Breast epithelium (tissue), 4 donors: ENCODE measurements at regions of chr3 and their contacts with region 1.

Region 1: DNA sequence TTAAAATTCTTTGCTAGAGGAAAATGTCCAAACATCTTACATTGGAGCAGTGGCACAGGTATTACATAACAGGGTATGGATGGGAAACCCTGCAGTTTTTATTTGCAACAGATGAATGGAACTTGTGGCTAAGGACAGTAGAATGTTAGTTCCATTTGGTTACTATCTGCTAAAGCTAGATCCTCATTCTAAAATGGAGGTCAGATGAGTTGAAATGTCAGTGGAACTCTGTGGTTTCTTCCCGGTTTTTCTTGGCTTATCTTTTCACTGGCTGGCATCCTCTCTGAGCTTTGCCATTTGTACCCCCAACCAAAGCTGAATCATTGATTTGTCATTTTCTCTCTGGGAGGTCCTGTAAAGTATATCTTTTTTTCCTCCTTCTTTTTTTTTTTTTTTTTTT is 68.9 kb downstream of the ARMC8 start:
- DNase-seq: no peak
- H3K4me3 ChIP-seq: no peak overlapping the region
- H3K27ac ChIP-seq: no peak overlapping the region
- H3K4me1 ChIP-seq: no peaks in the 10 kb centered on the region
- H3K27me3 ChIP-seq: no peaks in the 10 kb centered on the region
- CTCF ChIP-seq: no peak
- POLR2A ChIP-seq: no peak

Region 2: GRCh38 chr3:137222736-137223225 is 1033.2 kb before region 1 on chr3:
- intact Hi-C with region 1: no loop called
- DNase-seq: no peak
- H3K4me3 ChIP-seq: no peak overlapping the region
- H3K27ac ChIP-seq: no peak overlapping the region
- H3K4me1 ChIP-seq: no peaks in the 10 kb centered on the region
- H3K27me3 ChIP-seq: no peaks in the 10 kb centered on the region
- CTCF ChIP-seq: no peak
- POLR2A ChIP-seq: no peak

Region 3: DNA sequence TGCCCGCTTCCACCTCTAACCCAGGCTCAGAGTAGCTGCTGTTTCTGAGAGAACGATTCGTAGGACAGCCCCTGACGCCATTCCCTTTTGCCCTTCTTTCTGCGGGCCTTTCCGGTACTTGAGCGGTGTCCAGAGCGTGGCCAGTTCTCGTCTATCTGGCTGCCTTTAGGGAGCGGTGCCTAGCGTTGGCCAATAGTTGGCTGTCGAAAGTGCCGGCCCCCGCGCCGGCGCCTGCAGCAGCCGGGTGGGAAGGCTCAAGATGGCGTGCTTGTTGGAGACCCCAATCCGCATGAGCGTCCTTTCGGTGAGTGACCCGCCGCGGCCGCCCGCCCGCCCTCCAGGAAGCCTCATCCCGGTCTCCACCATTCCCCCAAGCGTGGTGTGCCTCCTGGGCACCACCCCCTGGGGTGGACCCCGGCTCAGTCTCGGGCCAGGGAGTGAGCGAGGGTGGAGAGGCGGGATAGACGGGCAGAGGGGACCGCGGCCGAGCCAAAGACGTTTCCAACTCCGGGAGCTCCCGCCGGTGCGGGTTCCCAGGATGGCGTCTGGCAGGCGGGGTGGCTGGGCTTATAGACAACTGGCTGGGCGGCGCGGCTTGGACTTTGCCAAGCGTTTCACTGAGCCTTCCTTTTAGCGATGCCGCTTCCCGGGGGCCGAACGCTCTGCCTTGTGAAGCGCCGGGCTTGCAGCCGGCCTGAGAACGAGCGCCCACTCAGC is 68.6 kb before region 1 on chr3 and contains the start of gene ARMC8:
- intact Hi-C with region 1: loop called (anchors 2 kb)
- DNase-seq: peak; percentile 25 to 57
- H3K4me3 ChIP-seq: peak within 1 kb of the TSS; percentile 79 to 99 (median 99)
- H3K27ac ChIP-seq: peak within 1 kb of the TSS; percentile 95 to 97
- H3K4me1 ChIP-seq: no peaks in the 10 kb centered on the region
- H3K27me3 ChIP-seq: no peaks in the 10 kb centered on the region
- CTCF ChIP-seq: no peak
- POLR2A ChIP-seq: no peak
- total RNA-seq, gene ARMC8: 74.4 to 93.3 (median 82.0) TPM

Region 4: DNA sequence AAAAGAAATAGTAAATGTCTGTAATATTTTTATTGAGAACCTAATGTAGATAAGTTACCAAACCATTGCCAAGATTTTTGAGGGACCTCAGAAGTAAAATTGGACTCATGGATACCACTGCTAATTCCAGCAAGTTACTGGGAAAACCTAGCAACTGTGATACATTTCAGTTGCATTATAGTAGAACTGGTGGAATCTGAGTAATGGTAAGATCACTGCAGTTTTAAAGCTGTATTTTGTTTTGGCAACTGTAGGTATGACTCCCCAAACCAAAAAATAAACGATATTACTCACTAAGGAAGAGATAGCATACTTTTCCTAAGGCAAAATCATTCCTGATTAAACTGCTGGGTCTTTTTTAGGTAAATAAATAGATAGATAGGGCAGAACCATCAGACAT is 15.0 kb before region 1 on chr3:
- intact Hi-C with region 1: no loop called
- DNase-seq: no peak
- H3K4me3 ChIP-seq: no peak overlapping the region
- H3K27ac ChIP-seq: no peak overlapping the region
- H3K4me1 ChIP-seq: no peaks in the 10 kb centered on the region
- H3K27me3 ChIP-seq: no peaks in the 10 kb centered on the region
- CTCF ChIP-seq: no peak
- POLR2A ChIP-seq: no peak

Region 5: GRCh38 chr3:138408751-138409161 is 152.7 kb after region 1 on chr3:
- intact Hi-C with region 1: loop called (anchors 10 kb)
- DNase-seq: no peak
- H3K4me3 ChIP-seq: no peak overlapping the region
- H3K27ac ChIP-seq: no peak overlapping the region
- H3K4me1 ChIP-seq: no peaks in the 10 kb centered on the region
- H3K27me3 ChIP-seq: no peaks in the 10 kb centered on the region
- CTCF ChIP-seq: no peak
- POLR2A ChIP-seq: no peak

Region 6: DNA sequence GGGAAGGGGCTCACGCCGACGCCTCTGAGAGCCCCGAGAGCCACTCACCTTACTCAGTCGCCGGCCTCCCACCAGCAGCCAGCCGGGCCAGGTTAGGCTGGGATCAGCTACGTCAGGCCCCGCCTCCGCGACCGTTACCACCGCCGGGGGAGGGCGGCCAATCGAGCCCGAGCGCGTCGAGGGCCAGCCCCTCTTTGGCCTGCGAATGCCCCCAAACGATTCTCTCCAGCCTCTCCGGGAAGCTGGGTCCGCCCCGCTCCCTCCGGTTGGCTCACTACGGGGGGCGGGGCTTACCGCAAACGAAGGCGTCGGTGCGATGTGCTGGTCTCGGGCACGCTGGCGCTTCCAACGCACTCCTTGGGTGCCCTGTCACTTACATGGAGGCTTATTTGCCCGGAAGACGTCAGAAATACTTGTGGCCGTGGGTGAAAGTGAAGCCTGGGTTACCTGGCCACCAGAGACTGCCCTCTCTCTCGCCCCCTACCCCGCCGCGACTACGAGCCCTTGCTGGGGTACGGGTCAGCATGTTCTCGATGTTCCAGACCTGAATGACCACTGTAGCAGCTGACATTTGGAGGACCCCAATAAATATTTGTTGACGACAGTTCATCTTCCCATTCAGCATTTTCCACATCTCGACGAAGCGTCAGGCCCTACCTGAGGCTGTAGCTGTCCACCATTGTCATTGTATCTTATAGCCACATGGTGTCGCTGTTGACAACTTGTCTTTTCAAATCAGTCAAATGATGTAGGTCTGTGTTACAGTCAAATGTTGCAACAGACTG is 338.3 kb after region 1 on chr3 and contains the start of gene CEP70:
- intact Hi-C with region 1: no loop called
- DNase-seq: peak; percentile 90 to 94
- H3K4me3 ChIP-seq: peak within 1 kb of the TSS; percentile 74 to 82 (median 79)
- H3K27ac ChIP-seq: peak within 1 kb of the TSS; percentile 98 to 100
- H3K4me1 ChIP-seq: peaks cover 0 to 6% of the 10 kb centered on the region in 2 donors
- H3K27me3 ChIP-seq: no peaks in the 10 kb centered on the region
- CTCF ChIP-seq: peak; percentile 89 to 98 (median 96)
- POLR2A ChIP-seq: peak; percentile 81
- total RNA-seq, gene CEP70: 19.5 to 84.0 (median 58.3) TPM